MCF 10A (cell line): ENCODE measurements at regions of chr5 and their contacts with region 1.

Region 1: GRCh38 chr5:168947212-168947868 is 353.6 kb downstream of the SLIT3 start:
- DNase-seq: peak; percentile 77
- H3K4me3 Mint-ChIP-seq: no peak overlapping the region
- H3K27ac Mint-ChIP-seq: no peak overlapping the region
- H3K4me1 Mint-ChIP-seq: no peaks in the 10 kb centered on the region
- H3K27me3 Mint-ChIP-seq: no peaks in the 10 kb centered on the region
- CTCF ChIP-seq: peak; percentile 83

Region 2: DNA sequence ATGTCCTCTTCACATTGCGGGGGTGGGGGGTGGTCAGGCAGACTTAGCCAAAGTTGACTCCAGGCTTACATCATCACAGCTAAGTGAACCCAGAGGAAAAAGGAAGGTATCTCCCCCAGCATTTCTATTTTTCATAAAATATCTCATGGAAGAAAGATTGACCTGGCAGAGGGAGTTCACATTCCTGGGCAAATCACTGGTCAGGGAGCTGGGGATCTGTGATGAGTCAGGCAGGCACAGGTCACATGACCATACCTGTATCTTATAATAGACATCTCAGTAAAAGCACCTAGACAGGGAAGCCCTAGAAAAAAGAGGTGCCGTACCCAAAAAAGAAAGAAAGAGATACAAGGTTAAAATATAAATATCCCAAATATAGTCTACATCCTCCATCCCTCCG is 713.2 kb before region 1 on chr5:
- CTCF ChIA-PET with region 1: no interaction called
- POLR2A ChIA-PET with region 1: no interaction called
- intact Hi-C with region 1: no loop called
- DNase-seq: peak; percentile 26
- H3K4me3 Mint-ChIP-seq: no peak overlapping the region
- H3K27ac Mint-ChIP-seq: no peak overlapping the region
- H3K4me1 Mint-ChIP-seq: no peaks in the 10 kb centered on the region
- H3K27me3 Mint-ChIP-seq: no peaks in the 10 kb centered on the region
- CTCF ChIP-seq: no peak

Region 3: DNA sequence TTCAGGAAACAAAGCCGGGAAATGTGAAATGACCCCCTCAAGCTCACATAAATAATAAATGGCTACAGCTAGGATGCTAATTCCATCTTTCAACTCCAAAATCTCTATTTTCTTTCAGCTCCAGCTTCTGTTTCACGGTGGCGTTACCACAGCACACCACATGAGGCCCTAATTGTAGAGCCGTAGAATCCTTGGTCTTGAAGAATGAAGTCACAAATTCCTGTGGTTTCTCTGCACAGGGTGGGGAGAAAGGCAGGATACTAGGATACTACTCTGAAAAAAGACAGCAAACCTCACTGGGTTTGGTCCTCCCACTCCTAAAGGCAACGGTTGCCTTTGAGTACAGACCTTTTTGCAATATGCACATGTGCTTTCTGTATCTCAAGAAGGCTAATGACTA is 475.0 kb before region 1 on chr5:
- CTCF ChIA-PET with region 1: interaction called, 3 read pairs
- POLR2A ChIA-PET with region 1: no interaction called
- intact Hi-C with region 1: loop called (anchors 5 kb)
- DNase-seq: peak; percentile 78
- H3K4me3 Mint-ChIP-seq: no peak overlapping the region
- H3K27ac Mint-ChIP-seq: peak overlapping the region; percentile 6
- H3K4me1 Mint-ChIP-seq: peaks cover 15% of the 10 kb centered on the region
- H3K27me3 Mint-ChIP-seq: no peaks in the 10 kb centered on the region
- CTCF ChIP-seq: peak; percentile 60

Region 4: DNA sequence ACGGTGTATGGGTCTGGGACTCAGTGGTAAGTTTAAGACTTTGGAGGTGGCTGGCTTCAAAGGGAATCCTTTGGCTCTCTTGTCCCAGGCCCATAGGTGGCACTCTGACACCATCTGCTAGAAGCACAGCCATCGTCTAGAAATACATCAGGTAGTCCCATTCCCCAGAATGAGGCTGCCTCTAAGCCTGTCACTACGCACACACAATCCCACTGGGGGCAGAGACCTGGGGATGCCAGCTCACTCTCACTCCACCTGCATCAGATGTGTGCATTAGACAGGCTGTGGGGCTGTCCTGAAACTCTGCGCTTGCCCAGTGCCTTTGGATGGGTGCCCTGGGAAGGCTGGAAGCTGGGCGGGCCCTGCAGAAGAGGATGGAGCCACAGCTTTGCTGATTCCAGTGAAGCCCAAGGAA is 240.7 kb before region 1 on chr5:
- CTCF ChIA-PET with region 1: interaction called, 3 read pairs
- POLR2A ChIA-PET with region 1: no interaction called
- intact Hi-C with region 1: loop called (anchors 1 kb)
- DNase-seq: peak; percentile 60
- H3K4me3 Mint-ChIP-seq: no peak overlapping the region
- H3K27ac Mint-ChIP-seq: no peak overlapping the region
- H3K4me1 Mint-ChIP-seq: no peaks in the 10 kb centered on the region
- H3K27me3 Mint-ChIP-seq: no peaks in the 10 kb centered on the region
- CTCF ChIP-seq: peak; percentile 53

Region 5: GRCh38 chr5:168935183-168935582 is 12.2 kb before region 1 on chr5:
- CTCF ChIA-PET with region 1: interaction called, 13 read pairs
- POLR2A ChIA-PET with region 1: no interaction called
- intact Hi-C with region 1: no loop called
- DNase-seq: no peak
- H3K4me3 Mint-ChIP-seq: no peak overlapping the region
- H3K27ac Mint-ChIP-seq: no peak overlapping the region
- H3K4me1 Mint-ChIP-seq: peaks cover 14% of the 10 kb centered on the region
- H3K27me3 Mint-ChIP-seq: no peaks in the 10 kb centered on the region
- CTCF ChIP-seq: no peak